Mucosa of descending colon (tissue), 3 donors: ENCODE measurements at regions of chr9 and their contacts with region 1.

Region 1: DNA sequence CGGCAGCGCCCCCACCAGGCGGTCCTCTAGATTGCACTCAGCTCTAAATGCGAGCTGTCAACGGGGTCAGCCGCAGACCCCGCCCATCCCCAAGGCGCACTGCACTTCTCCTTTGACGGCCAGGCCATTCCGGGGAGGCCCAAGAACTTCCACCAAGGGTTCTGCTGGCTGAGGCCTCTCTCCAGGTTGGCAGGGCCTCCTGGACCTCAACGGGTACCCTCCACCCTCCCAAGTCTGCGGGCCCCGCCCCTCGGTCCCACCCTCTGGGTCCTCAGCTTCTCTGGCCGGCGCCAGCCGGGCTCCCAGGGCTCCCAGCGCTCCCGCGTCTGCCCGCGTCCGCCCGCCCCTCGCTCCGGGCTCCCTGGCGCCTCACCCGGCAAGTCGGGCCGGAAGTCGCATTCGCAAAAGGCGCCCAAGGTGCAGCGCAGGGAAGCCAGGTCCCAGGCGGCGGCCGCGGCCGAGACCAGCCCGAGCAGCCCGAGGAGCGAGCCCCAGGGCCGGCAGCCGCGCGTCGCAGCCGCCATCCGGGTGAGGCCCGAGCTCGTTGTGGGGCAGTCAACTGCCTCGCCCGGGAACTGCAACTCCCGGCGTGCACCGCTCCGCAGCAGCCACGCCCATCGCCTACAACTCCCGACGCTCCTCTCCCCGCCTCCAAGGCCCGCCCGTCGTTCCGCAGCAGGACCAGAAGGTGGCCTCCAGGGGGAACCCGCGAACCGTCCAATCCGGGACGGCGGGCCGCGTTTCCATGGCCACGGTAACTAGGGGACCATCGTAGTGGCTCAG is at the start of gene TOR2A:
- DNase-seq: peak; percentile 97 to 98 (median 98)
- ATAC-seq: peak; percentile 97
- H3K4me3 ChIP-seq: peak within 1 kb of the TSS; percentile 60
- H3K4me1 ChIP-seq: peaks cover 11% of the 10 kb centered on the region
- CTCF ChIP-seq: peak; percentile 96
- total RNA-seq, gene TOR2A: 19.7 to 30.2 (median 28.2) TPM

Region 2: DNA sequence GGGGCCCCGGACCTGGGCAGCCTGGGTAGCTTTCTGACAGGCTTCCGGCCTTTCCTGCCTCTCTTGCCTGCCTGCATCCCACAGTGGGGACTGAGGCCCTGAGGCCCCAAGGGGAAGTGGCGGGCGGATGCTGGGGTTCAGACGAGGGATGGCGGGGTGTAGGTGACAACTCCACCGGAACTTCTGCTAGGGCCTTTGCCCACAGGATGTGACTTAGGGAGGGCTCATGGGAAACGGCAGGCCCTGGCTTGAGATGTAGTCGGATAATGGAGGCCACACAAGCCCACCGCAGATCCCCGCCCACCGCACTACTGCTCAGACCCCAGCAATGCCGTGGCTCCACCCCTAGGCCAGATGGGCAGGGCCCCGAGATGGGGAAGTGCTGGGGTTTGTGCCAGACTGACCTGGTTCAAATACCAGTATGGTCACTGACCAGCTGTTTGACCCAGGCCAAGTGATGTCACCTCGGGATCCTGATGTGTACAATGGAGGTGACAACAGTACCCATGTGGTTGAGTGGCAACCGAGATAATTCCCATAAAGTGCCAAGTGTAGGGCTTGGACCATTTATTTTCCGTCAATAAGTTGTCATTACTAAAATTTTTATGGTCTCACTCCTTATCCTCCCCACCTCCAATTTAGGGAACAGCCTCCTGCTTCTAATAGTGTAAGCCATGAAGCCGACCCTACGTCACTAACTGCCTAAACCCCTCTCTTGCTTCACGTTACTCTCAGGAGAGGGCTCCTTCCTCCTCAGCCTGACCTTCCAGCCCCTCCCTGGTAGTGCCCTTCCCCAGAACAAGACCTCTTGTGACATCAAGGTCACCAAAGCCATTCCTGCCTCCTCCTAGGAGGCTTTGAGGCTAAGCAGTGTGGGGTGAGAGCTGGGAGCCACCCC is 48.4 kb after region 1 on chr9:
- intact Hi-C with region 1: loop called in 1 of 2 experiments (anchors 5 kb)
- DNase-seq: peak; percentile 60 to 92 (median 74)
- ATAC-seq: peak; percentile 12
- H3K4me3 ChIP-seq: no peak overlapping the region
- H3K4me1 ChIP-seq: peaks cover 23% of the 10 kb centered on the region
- CTCF ChIP-seq: no peak

Region 3: GRCh38 chr9:127869310-127870152 is 134.6 kb after region 1 on chr9:
- intact Hi-C with region 1: loop called in 1 of 2 experiments (anchors 10 kb)
- DNase-seq: peak; percentile 88 to 95 (median 91)
- ATAC-seq: peak; percentile 89
- H3K4me3 ChIP-seq: no peak overlapping the region
- H3K4me1 ChIP-seq: peaks cover 10% of the 10 kb centered on the region
- CTCF ChIP-seq: peak; percentile 82

Region 4: DNA sequence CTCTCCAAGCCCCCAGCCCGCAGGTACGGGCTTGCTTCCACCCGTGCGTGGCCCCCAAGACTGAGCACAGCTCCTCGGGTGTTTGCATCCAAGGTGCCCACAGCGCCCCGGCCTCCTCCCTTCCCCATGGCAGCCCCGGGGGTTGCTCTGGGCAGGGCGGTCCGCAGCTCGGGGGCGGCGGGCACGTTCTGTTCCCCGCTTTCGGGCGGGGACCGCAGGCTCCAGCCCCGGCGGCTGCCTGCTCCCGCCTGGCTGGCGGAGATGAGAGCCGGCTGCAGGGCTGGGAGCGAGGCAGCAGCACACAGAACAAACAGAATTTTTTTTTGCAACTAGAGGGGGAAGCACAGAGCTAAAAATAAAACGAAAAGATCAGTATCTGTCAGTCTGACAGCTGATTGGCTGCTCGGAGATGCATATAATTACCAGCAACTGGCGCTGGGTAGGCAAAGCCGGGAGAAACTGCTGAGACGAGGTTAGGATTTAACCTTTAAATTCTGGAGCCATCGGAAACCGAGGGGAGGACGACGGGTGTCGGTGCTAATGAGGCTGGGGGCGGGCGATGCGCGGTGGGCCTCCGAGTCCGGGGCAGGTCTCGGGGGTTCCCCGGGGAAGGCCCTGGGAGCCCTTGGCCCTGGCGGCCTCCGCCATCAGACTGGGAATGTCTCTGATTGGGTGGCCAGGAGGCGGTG is 1585.8 kb after region 1 on chr9:
- intact Hi-C with region 1: no loop called
- DNase-seq: peak in 2 of 3 donors; percentile 56 to 60
- ATAC-seq: peak; percentile 79
- H3K4me3 ChIP-seq: no peak overlapping the region
- H3K4me1 ChIP-seq: peaks cover 11% of the 10 kb centered on the region
- CTCF ChIP-seq: no peak